Activated CD8-positive, alpha-beta T cell treated with anti-CD3 and anti-CD28 coated beads for 36 hours (primary cell): ENCODE measurements at regions of chr11 and their contacts with region 1.

Region 1: GRCh38 chr11:6285019-6285418 is 25.4 kb downstream of the CCKBR start:
- DNase-seq: no peak
- ATAC-seq: no peak
- H3K4me3 Mint-ChIP-seq: no peak overlapping the region
- H3K27ac Mint-ChIP-seq: no peak overlapping the region
- H3K4me1 Mint-ChIP-seq: no peaks in the 10 kb centered on the region
- H3K27me3 Mint-ChIP-seq: peaks cover 45% of the 10 kb centered on the region
- CTCF ChIP-seq: no peak

Region 2: GRCh38 chr11:6298605-6299004 is 13.6 kb after region 1 on chr11:
- CTCF ChIA-PET with region 1: interaction called, 10 read pairs
- POLR2A ChIA-PET with region 1: no interaction called
- intact Hi-C with region 1: no loop called
- DNase-seq: peak; percentile 48
- ATAC-seq: peak; percentile 83
- H3K4me3 Mint-ChIP-seq: no peak overlapping the region
- H3K27ac Mint-ChIP-seq: no peak overlapping the region
- H3K4me1 Mint-ChIP-seq: no peaks in the 10 kb centered on the region
- H3K27me3 Mint-ChIP-seq: peaks cover 7% of the 10 kb centered on the region
- CTCF ChIP-seq: peak; percentile 35